Motor neuron (in vitro differentiated cells): ENCODE measurements at regions of chr1 and their contacts with region 1.

Region 1: GRCh38 chr1:19390901-19391595 is 78.9 kb downstream of the SLC66A1 start:
- ATAC-seq: peak in 3 of 8 experiments; percentile 9 to 40 (median 30)
- H3K4me3 ChIP-seq: no peak overlapping the region
- H3K27ac ChIP-seq: no peak overlapping the region
- H3K4me1 ChIP-seq: peaks cover 0 to 16% of the 10 kb centered on the region in 2 donors

Region 2: GRCh38 chr1:19643602-19644394 is 252.8 kb after region 1 on chr1 and contains the start of gene NBL1:
- in situ Hi-C with region 1: loop called in 2 of 9 experiments (anchors 25 kb)
- ATAC-seq: peak; percentile 48 to 83 (median 78)
- H3K4me3 ChIP-seq: peak within 1 kb of the TSS; percentile 35 to 48 (median 39)
- H3K27ac ChIP-seq: no peak within 1 kb of the TSS
- H3K4me1 ChIP-seq: peaks cover 0 to 8% of the 10 kb centered on the region in 2 donors
- total RNA-seq, gene NBL1: 0.78 to 149 (median 11.6) TPM